ENCODE measurements at regions of chr6 and their contacts with region 1.

Region 1: DNA sequence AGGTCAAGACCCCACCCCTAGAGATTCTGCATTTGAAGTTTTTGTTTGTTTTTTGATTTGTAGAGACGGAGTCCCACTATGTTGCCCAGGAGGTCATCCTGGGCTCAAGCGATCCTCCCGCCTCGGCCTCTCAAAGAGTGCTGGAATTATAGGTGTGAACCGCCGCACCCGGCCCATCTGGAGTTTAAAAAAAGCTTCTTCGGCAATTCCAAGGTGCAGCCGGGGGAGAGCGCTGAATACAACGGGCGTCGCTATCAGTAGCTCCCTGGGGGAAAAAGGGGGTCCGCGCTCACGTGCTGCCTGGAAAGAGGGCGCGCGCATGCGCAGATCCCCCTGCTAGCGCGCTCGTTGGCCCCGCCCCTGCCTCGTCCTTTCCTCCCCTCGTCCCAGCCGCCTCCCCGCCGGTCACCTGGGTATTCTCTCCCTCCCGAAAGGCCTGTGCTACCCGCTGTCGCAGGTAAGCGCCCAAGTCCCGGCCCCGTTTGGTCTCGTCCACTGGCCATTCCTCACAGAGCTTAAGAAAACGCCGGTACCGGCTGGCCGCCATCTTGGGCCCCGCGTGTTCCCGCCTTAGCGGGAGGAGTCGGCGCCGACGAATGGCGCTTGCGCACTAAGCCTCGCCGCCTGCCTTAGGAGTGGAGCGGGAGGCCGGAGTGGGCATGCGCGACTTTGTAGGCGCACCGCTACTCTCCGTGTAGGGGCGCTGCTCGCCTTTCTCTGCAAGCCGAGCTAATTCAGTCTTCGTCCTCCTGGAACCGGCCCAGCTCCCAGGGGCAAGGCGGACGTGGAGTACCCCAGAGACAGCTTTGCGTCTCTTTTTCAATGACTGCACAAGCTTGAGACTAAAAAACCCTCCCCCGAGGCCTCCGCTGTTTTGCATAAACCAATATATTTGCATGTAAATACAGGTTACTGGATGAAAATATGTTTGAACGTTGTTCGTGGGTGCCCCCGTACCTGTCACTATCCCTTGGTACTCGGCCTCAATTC is at the start of gene UQCC2:
- DNase-seq: peak; percentile 93 to 99 (median 97)
- ATAC-seq: peak; percentile 96
- H3K4me3 ChIP-seq: peak within 1 kb of the TSS; percentile 79 to 96
- H3K4me3 Mint-ChIP-seq: peak within 1 kb of the TSS; percentile 98
- H3K27ac ChIP-seq: peak within 1 kb of the TSS; percentile 71 to 88
- H3K27ac Mint-ChIP-seq: peak within 1 kb of the TSS; percentile 96
- H3K4me1 ChIP-seq: peaks cover 19% of the 10 kb centered on the region
- H3K4me1 Mint-ChIP-seq: peaks cover 36% of the 10 kb centered on the region
- H3K27me3 ChIP-seq: no peaks in the 10 kb centered on the region
- H3K27me3 Mint-ChIP-seq: no peaks in the 10 kb centered on the region
- CTCF ChIP-seq: peak; percentile 59
- total RNA-seq, gene UQCC2: 6.2 to 6.8 TPM

Region 2: GRCh38 chr6:33585403-33586107 is 125.9 kb before region 1 on chr6:
- CTCF ChIA-PET with region 1: interaction called, 11 read pairs
- POLR2A ChIA-PET with region 1: interaction called, 3 read pairs
- intact Hi-C with region 1: no loop called
- DNase-seq: peak; percentile 73 to 96 (median 90)
- ATAC-seq: peak; percentile 97
- H3K4me3 ChIP-seq: peak overlapping the region; percentile 1 to 8
- H3K4me3 Mint-ChIP-seq: peak overlapping the region; percentile 39
- H3K27ac ChIP-seq: peak overlapping the region in 1 of 2 experiments; percentile 57
- H3K27ac Mint-ChIP-seq: peak overlapping the region; percentile 91
- H3K4me1 ChIP-seq: peaks cover 19% of the 10 kb centered on the region
- H3K4me1 Mint-ChIP-seq: peaks cover 17% of the 10 kb centered on the region
- H3K27me3 ChIP-seq: no peaks in the 10 kb centered on the region
- H3K27me3 Mint-ChIP-seq: no peaks in the 10 kb centered on the region
- CTCF ChIP-seq: peak; percentile 92

Region 3: DNA sequence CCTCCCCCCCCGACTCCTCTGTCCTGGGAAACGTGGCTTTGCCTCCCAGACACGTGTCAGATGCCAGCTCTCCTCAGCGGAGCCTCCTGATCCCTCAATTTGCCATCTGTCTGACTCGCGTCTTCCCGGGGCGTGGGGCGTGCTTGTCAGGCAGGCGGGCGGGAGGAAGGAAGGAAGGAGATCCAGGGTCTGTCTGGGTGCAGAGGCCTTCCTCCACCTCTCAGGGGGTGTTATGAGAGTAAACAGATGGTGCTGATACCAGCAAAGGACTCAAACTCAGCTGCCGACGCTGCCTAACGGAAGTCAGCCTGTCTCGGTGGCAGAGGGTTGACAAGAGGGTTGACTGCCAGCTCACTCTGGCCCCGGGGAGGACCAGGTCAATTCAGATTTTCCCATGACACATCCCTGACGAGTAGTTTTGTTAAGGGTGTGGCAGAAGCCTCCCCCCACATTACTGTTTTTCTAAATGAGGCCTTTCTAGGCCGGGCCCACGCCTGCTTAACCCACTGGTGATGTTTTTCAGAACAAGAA is 17.0 kb before region 1 on chr6:
- CTCF ChIA-PET with region 1: interaction called, 10 read pairs
- POLR2A ChIA-PET with region 1: interaction called, 8 read pairs
- intact Hi-C with region 1: loop called in 1 of 2 experiments (anchors 2 kb)
- DNase-seq: peak; percentile 22 to 81 (median 73)
- ATAC-seq: peak; percentile 63
- H3K4me3 ChIP-seq: no peak overlapping the region
- H3K4me3 Mint-ChIP-seq: peak overlapping the region; percentile 69
- H3K27ac ChIP-seq: peak overlapping the region; percentile 37 to 81
- H3K27ac Mint-ChIP-seq: peak overlapping the region; percentile 97
- H3K4me1 ChIP-seq: peaks cover 64% of the 10 kb centered on the region
- H3K4me1 Mint-ChIP-seq: peaks cover 62% of the 10 kb centered on the region
- H3K27me3 ChIP-seq: no peaks in the 10 kb centered on the region
- H3K27me3 Mint-ChIP-seq: no peaks in the 10 kb centered on the region
- CTCF ChIP-seq: no peak

Region 4: DNA sequence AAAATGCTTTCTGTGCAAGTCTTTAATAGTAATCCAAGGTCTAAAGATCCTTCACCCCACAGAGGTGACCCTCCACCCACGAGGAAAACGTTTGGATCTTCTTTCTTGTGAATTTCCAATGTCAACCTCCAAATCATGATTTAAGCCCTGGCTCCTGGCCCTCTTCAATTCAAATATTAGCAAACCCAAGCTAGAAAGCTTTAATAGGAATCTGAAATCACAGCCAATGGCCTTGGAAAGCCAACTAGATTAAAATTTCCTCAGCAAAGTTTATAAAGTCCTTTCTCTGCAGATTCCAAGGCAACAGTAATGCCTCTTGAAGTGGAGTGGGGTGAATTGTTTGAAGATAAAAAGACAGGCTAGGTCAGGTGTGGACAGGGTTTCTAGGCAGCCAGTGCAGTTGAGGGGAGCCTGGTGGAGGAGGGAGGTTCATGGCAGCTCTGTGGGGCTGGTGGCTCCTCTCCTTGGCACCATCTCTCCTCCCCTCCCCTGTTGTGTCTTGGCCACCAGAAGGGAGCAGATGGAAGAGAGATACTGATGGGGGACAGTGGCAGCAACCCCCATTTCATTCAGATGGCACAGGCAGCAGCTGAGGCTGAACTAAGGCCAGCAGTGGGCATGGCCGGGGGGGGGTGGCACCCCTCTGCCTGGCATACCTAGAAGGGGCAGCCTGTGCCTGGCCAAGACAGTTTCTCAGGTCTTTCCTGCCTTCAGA is 12.1 kb after region 1 on chr6:
- CTCF ChIA-PET with region 1: interaction called, 20 read pairs
- POLR2A ChIA-PET with region 1: no interaction called
- intact Hi-C with region 1: no loop called
- DNase-seq: no peak
- ATAC-seq: no peak
- H3K4me3 ChIP-seq: no peak overlapping the region
- H3K4me3 Mint-ChIP-seq: no peak overlapping the region
- H3K27ac ChIP-seq: no peak overlapping the region
- H3K27ac Mint-ChIP-seq: no peak overlapping the region
- H3K4me1 ChIP-seq: peaks cover 15% of the 10 kb centered on the region
- H3K4me1 Mint-ChIP-seq: peaks cover 16% of the 10 kb centered on the region
- H3K27me3 ChIP-seq: no peaks in the 10 kb centered on the region
- H3K27me3 Mint-ChIP-seq: peaks cover 15% of the 10 kb centered on the region
- CTCF ChIP-seq: no peak

Region 5: DNA sequence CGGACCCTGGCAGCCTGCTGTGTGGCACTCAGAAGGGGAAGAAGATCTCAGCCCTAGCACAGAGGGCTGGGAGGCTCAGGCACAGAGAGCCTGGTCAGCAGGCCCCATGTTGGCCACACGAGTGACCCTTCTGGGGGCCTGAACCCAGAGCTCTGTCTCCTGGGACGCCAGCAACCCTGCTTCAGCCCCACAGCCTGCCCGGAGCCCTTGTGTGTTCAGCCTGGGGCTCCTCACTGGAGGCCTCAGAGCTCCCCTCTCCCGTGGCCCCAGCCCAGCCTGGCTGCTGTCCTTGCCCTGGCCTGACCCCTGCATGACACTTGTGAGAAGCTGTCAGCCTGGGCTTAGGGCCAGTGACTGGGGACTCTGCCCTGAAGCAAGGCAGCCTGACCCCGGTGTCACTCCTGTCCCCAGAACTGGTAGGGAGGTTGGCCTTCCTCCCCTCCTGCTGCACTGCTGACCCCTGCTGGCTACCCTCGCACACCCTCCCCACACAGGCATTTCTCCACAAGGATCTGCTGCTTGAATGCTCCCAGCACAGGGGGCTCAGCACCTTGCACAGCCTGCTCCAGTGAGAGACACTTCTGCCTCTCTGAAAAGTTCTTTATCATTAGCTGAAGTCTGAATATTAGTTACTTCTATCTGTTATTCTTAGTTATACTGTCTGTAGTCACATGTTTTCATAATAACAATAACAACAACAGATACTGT is 50.6 kb after region 1 on chr6:
- CTCF ChIA-PET with region 1: interaction called, 19 read pairs
- POLR2A ChIA-PET with region 1: no interaction called
- intact Hi-C with region 1: loop called in 1 of 2 experiments (anchors 1 kb)
- DNase-seq: peak in 6 of 9 experiments; percentile 14 to 57 (median 40)
- ATAC-seq: no peak
- H3K4me3 ChIP-seq: no peak overlapping the region
- H3K4me3 Mint-ChIP-seq: no peak overlapping the region
- H3K27ac ChIP-seq: no peak overlapping the region
- H3K27ac Mint-ChIP-seq: no peak overlapping the region
- H3K4me1 ChIP-seq: peaks cover 5% of the 10 kb centered on the region
- H3K4me1 Mint-ChIP-seq: peaks cover 5% of the 10 kb centered on the region
- H3K27me3 ChIP-seq: no peaks in the 10 kb centered on the region
- H3K27me3 Mint-ChIP-seq: peaks cover 10% of the 10 kb centered on the region
- CTCF ChIP-seq: no peak

Region 6: DNA sequence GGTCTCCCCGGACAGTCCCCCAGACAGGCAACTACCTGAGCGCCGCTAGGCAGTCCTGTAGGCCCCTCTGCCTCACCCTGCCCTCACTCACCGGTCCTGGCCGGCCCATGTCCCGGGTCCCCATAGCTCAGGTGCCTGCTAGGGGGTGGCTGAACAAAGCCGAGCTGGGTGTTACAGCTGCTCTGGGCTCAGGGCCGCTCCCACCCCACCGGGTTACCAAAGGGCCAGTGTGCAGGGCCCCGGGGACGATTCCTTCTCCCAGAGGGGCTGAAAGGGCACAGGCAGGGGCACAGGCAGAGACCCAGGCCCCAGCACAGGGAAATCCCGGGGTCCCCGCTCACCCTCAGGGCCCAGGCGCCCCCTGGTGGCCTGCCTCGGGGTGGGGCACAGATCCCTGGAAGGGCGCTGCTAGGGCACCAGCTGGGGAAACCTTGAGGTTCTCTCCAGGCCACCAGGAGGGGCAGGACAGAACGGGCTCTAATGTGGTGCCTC is 316.1 kb after region 1 on chr6:
- CTCF ChIA-PET with region 1: interaction called, 10 read pairs
- POLR2A ChIA-PET with region 1: no interaction called
- intact Hi-C with region 1: loop called in 1 of 2 experiments (anchors 1 kb)
- DNase-seq: peak; percentile 29 to 84 (median 64)
- ATAC-seq: peak; percentile 66
- H3K4me3 ChIP-seq: no peak overlapping the region
- H3K4me3 Mint-ChIP-seq: no peak overlapping the region
- H3K27ac ChIP-seq: no peak overlapping the region
- H3K27ac Mint-ChIP-seq: no peak overlapping the region
- H3K4me1 ChIP-seq: no peaks in the 10 kb centered on the region
- H3K4me1 Mint-ChIP-seq: no peaks in the 10 kb centered on the region
- H3K27me3 ChIP-seq: no peaks in the 10 kb centered on the region
- H3K27me3 Mint-ChIP-seq: peaks cover 5% of the 10 kb centered on the region
- CTCF ChIP-seq: peak; percentile 82

Region 7: GRCh38 chr6:34374069-34374468 is 662.6 kb after region 1 on chr6:
- CTCF ChIA-PET with region 1: no interaction called
- POLR2A ChIA-PET with region 1: no interaction called
- intact Hi-C with region 1: no loop called
- DNase-seq: no peak
- ATAC-seq: no peak
- H3K4me3 ChIP-seq: no peak overlapping the region
- H3K4me3 Mint-ChIP-seq: no peak overlapping the region
- H3K27ac ChIP-seq: no peak overlapping the region
- H3K27ac Mint-ChIP-seq: no peak overlapping the region
- H3K4me1 ChIP-seq: peaks cover 12% of the 10 kb centered on the region
- H3K4me1 Mint-ChIP-seq: peaks cover 28% of the 10 kb centered on the region
- H3K27me3 ChIP-seq: no peaks in the 10 kb centered on the region
- H3K27me3 Mint-ChIP-seq: no peaks in the 10 kb centered on the region
- CTCF ChIP-seq: no peak

Region 8: DNA sequence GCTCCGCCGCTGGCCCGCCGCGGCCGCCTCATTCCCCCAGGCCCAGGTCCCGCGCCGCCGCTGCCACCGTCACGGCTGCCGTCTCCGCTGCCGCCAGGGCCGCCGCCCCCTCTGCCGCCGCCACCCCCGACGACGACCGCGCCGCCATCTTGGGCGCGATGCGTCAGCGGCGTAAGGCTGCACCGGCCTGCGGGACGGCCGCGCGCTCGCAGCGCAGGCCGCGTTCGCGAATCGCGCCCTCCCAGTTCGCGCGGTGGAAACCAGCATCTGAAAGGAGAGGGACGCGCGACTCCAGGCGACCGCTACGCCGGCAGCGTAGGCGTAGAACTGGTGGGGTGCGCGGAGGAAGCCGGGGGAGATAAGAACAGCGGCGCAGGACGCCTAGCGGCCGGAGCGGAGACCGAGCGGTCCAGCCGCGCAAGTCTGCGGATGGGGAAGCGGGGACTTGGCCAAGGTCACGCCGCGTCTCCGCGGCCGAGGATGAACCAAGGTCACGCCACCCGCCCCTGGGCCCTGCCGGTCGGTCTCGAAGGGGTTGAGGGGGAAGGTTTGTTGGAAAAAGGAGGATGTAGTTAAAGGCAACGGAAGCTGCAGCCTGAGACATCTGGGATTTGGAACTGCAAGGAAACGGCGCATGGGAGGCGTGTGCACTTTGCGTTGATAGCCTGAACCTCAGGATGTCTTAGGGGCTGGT is 681.2 kb after region 1 on chr6 and contains the start of gene NUDT3:
- CTCF ChIA-PET with region 1: no interaction called
- POLR2A ChIA-PET with region 1: no interaction called
- intact Hi-C with region 1: loop called in 1 of 2 experiments (anchors 10 kb)
- DNase-seq: peak; percentile 90 to 98 (median 93)
- ATAC-seq: peak; percentile 90
- H3K4me3 ChIP-seq: peak within 1 kb of the TSS; percentile 78 to 96
- H3K4me3 Mint-ChIP-seq: peak within 1 kb of the TSS; percentile 72
- H3K27ac ChIP-seq: peak within 1 kb of the TSS; percentile 71 to 75
- H3K27ac Mint-ChIP-seq: peak within 1 kb of the TSS; percentile 94
- H3K4me1 ChIP-seq: peaks cover 15% of the 10 kb centered on the region
- H3K4me1 Mint-ChIP-seq: peaks cover 26% of the 10 kb centered on the region
- H3K27me3 ChIP-seq: no peaks in the 10 kb centered on the region
- H3K27me3 Mint-ChIP-seq: no peaks in the 10 kb centered on the region
- CTCF ChIP-seq: peak; percentile 77
- total RNA-seq, gene NUDT3: 12.5 to 12.9 TPM

Region 9: DNA sequence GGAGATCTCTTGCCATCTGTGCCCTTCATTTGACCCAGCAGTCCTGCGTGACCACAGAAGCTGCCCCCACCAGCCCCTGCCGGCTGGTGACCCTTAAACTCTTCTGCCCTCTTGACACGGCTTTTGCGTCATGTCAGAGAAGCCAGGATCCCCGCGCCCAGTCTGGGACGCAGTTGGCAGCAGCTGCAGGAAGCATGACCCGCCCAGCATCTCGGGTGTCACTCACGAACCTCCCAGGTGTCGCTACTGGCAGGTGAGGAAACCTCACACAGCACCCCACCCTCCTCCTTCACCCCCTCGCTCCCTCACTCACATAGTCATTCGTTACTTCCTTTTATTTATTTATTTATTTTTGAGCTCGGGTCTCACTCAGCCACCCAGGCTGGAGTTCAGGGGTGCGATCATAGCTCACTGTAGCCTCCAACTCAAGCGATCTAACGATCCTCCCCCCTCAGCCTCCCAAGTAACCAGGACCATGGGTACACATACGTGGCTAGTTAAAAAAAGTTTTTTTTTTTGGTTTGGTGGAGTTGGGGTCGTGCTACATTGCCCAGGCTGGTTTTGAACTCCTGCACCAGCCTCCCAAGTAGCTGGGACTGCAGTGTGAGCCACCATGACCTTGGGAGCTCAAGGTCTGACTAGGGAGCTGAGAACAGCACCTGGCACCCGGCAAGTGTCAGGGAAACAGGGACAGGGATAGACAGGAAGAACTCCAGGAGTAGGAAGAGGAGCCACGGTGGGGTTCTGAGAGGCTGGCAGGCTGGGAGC is 858.8 kb after region 1 on chr6:
- CTCF ChIA-PET with region 1: no interaction called
- POLR2A ChIA-PET with region 1: no interaction called
- intact Hi-C with region 1: no loop called
- DNase-seq: no peak
- ATAC-seq: no peak
- H3K4me3 ChIP-seq: no peak overlapping the region
- H3K4me3 Mint-ChIP-seq: no peak overlapping the region
- H3K27ac ChIP-seq: no peak overlapping the region
- H3K27ac Mint-ChIP-seq: no peak overlapping the region
- H3K4me1 ChIP-seq: no peaks in the 10 kb centered on the region
- H3K4me1 Mint-ChIP-seq: no peaks in the 10 kb centered on the region
- H3K27me3 ChIP-seq: peaks cover 0 to 2% of the 10 kb centered on the region in 2 experiments
- H3K27me3 Mint-ChIP-seq: peaks cover 10% of the 10 kb centered on the region
- CTCF ChIP-seq: no peak

Measured in CD8-positive, alpha-beta T cell (primary cell).